Activated B cell treated with CpG ODN at 0.5 μM for 24 hours (primary cell): ENCODE measurements at regions of chr2 and their contacts with region 1.

Region 1: DNA sequence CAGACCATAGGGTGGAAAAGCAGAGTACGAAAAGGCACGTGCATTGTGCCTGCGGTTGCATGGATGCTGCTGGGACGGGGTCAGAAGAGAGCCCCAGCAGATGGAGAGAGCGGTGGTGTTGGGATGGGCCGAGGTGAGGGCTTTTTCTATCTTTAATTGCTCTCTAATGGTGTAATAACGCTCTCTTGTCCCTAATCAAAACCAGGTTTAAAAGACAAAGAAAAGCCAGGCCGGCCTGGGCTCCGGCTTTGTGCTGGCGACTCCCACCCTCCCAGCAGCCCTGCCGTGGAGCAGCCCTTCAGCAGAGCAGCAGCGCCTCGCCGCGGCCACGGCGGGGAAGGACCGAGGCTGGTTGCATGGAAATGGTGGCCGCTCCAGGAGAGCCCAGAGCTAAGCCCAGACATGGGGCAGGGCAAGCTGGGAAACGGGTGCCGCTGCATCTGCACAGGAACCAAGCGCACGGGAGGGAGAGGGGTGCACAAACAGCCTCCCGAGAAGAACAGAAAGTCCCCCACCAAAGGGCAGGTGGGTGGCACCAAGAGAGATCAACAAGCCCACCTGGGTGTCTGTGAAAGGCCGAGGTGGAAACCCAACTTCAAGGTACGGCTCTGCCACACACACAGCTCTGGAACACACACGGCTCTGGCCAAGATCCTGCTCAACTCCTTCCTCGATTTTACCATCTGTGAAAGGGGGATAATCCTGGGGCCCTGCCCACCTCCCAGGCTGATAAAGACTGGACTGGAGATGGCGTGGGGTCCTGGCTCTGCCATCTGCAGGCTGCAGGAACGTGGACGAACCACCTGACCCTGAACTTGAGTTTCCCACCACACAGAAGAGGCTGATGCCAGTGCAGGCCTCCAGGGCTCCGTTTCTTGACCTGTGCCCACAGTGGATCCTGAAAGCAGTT is 15.0 kb downstream of the HS1BP3 start:
- DNase-seq: peak; percentile 64
- ATAC-seq: peak; percentile 97
- H3K4me3 Mint-ChIP-seq: no peak overlapping the region
- H3K27ac Mint-ChIP-seq: no peak overlapping the region
- H3K4me1 Mint-ChIP-seq: peaks cover 8% of the 10 kb centered on the region
- H3K27me3 Mint-ChIP-seq: no peaks in the 10 kb centered on the region
- CTCF ChIP-seq: no peak

Region 2: DNA sequence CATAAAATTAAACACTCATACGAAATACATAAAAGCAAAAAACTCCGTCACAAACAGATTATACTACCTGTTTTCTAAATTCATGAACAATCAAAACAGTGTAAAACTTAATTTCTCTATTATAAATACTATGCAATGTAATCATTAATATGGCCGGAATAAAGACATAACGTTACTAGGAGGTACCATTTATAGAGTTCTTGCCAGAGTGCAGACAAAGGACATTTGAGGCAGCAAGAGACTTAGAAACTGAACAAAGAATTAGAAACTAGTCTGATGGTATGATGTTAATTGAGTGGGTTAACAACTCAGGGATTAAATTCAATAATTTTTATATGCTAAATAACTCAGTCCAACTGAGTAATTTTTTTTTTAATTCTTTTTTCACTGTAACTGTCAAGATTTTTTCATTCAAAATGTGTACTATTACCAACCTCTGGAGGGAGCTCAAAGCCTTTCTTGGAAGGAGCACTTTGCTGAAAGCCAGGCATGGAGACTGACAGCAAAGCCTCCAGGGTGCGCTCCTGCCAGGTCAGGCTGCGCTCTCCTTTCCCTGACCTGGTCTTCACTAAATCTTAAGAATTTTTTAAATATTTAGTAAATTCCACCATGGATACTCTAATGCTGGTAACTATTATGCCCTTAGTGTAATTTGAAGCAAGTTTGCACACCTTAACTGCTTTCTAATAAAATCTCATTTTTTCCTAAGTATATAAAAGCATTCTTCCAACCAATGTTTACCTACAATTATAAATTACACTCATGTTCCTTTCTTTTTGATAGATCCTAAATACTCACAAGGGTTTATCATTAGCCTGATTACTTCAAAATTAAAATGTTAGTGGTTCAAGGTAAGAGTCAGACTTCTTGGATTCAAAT is 680.1 kb before region 1 on chr2:
- CTCF ChIA-PET with region 1: no interaction called
- POLR2A ChIA-PET with region 1: no interaction called
- intact Hi-C with region 1: loop called (anchors 5 kb)
- DNase-seq: no peak
- ATAC-seq: peak; percentile 83
- H3K4me3 Mint-ChIP-seq: no peak overlapping the region
- H3K27ac Mint-ChIP-seq: no peak overlapping the region
- H3K4me1 Mint-ChIP-seq: no peaks in the 10 kb centered on the region
- H3K27me3 Mint-ChIP-seq: no peaks in the 10 kb centered on the region
- CTCF ChIP-seq: peak; percentile 80

Region 3: GRCh38 chr2:20291106-20291564 is 344.8 kb before region 1 on chr2:
- CTCF ChIA-PET with region 1: no interaction called
- POLR2A ChIA-PET with region 1: no interaction called
- intact Hi-C with region 1: no loop called
- DNase-seq: no peak
- ATAC-seq: peak; percentile 56
- H3K4me3 Mint-ChIP-seq: no peak overlapping the region
- H3K27ac Mint-ChIP-seq: no peak overlapping the region
- H3K4me1 Mint-ChIP-seq: no peaks in the 10 kb centered on the region
- H3K27me3 Mint-ChIP-seq: no peaks in the 10 kb centered on the region
- CTCF ChIP-seq: no peak

Region 4: DNA sequence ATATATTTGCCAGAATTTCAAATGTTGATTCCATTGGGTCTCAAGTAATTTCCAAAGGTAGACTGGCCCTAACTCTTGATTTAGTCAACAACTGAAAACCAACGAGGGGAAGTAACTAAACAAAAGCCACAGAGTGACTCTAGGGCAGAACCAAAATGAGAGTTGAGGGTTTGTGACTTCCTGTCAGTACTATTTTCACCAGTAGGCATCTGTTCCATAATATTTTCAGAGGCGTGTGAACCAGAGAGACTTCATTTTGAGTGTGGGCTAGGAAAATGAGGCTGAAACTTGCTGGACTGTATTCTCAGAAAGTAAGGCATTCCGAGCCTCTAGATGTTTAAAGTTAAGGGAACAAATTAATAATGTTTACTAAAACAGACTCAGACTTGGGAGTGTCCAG is 101.6 kb after region 1 on chr2:
- CTCF ChIA-PET with region 1: no interaction called
- POLR2A ChIA-PET with region 1: no interaction called
- intact Hi-C with region 1: no loop called
- DNase-seq: no peak
- ATAC-seq: no peak
- H3K4me3 Mint-ChIP-seq: peak overlapping the region; percentile 52
- H3K27ac Mint-ChIP-seq: peak overlapping the region; percentile 18
- H3K4me1 Mint-ChIP-seq: peaks cover 24% of the 10 kb centered on the region
- H3K27me3 Mint-ChIP-seq: no peaks in the 10 kb centered on the region
- CTCF ChIP-seq: no peak